A673 (cell line): ENCODE measurements at regions of chr3 and their contacts with region 1.

Region 1: GRCh38 chr3:87503900-87504508 is 227.6 kb upstream of the POU1F1 start:
- DNase-seq: peak; percentile 89
- H3K4me3 ChIP-seq: no peak overlapping the region
- H3K27ac ChIP-seq: no peak overlapping the region
- H3K4me1 ChIP-seq: peaks cover 35% of the 10 kb centered on the region
- H3K27me3 ChIP-seq: no peaks in the 10 kb centered on the region
- CTCF ChIP-seq: peak; percentile 80

Region 2: GRCh38 chr3:87260270-87260669 is 243.7 kb before region 1 on chr3:
- CTCF ChIA-PET with region 1: interaction called, 5 read pairs
- POLR2A ChIA-PET with region 1: no interaction called
- intact Hi-C with region 1: loop called (anchors 2 kb)
- DNase-seq: peak; percentile 89
- H3K4me3 ChIP-seq: no peak overlapping the region
- H3K27ac ChIP-seq: peak overlapping the region; percentile 18
- H3K4me1 ChIP-seq: peaks cover 52% of the 10 kb centered on the region
- H3K27me3 ChIP-seq: no peaks in the 10 kb centered on the region
- CTCF ChIP-seq: peak; percentile 80

Region 3: GRCh38 chr3:87298111-87298718 is 205.8 kb before region 1 on chr3:
- CTCF ChIA-PET with region 1: interaction called, 3 read pairs
- POLR2A ChIA-PET with region 1: no interaction called
- intact Hi-C with region 1: loop called (anchors 2 kb)
- DNase-seq: peak; percentile 84
- H3K4me3 ChIP-seq: no peak overlapping the region
- H3K27ac ChIP-seq: peak overlapping the region; percentile 17
- H3K4me1 ChIP-seq: peaks cover 43% of the 10 kb centered on the region
- H3K27me3 ChIP-seq: no peaks in the 10 kb centered on the region
- CTCF ChIP-seq: peak; percentile 85

Region 4: DNA sequence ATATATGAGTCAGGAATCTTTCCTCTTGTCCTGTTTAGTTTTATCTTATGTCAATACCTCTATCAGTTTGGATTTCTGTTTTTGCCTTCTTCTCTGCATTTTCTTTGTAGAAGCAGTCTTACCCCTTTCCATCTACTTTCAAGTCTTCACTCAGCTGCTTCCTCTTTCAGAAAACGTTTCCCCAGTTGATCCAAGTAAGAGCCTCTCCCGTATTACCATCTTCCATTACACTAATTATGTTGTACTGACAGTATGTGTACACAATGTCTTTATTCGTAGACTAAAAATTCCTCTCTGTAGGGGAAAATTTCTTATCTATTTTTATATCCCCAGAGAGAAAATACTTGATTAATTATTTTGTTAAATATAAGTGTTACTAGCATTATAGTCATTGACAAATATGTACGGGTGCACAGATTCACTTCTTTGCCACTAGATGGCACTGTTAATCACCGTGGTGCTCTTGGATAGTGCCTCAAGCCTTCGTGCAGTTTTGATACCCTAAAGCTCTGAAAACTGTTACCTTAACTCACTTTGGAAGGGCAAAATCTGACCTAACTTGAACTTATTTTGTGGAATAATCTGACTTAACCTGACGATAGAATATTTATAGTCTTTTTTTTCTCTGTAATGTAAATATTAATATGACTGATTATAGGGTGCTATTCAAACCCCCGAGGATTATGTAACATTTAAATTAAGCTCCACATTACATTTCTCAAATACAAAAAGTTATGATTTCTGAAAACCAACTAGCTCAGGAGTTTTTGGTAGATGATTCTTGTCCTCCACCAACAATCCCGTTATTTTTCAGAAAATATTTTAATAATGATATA is 153.4 kb before region 1 on chr3:
- CTCF ChIA-PET with region 1: no interaction called
- POLR2A ChIA-PET with region 1: no interaction called
- intact Hi-C with region 1: loop called (anchors 2 kb)
- DNase-seq: peak; percentile 79
- H3K4me3 ChIP-seq: no peak overlapping the region
- H3K27ac ChIP-seq: peak overlapping the region; percentile 50
- H3K4me1 ChIP-seq: peaks cover 19% of the 10 kb centered on the region
- H3K27me3 ChIP-seq: no peaks in the 10 kb centered on the region
- CTCF ChIP-seq: peak; percentile 96

Region 5: DNA sequence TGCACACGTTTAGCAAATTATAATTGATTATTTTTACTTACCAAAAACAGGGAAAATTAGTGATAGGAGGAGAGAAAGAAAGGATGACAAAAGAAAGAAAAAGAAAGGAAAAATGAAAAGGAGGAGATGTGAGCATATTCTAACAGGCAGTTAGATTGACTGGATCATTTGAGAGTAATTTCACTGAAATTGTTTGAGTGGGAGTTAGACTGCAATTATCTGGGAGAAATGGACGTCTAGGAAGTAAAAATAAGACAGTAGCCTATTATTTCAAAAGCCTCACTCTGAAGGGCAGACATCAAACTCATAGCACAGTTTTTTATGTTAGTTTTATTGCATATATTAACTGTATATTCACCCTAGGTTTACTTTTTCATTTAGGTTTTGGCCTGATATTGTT is 45.2 kb after region 1 on chr3:
- CTCF ChIA-PET with region 1: no interaction called
- POLR2A ChIA-PET with region 1: no interaction called
- intact Hi-C with region 1: loop called (anchors 1 kb)
- DNase-seq: peak; percentile 82
- H3K4me3 ChIP-seq: no peak overlapping the region
- H3K27ac ChIP-seq: peak overlapping the region; percentile 99
- H3K4me1 ChIP-seq: peaks cover 57% of the 10 kb centered on the region
- H3K27me3 ChIP-seq: no peaks in the 10 kb centered on the region
- CTCF ChIP-seq: no peak